Breast epithelium (tissue), 4 donors: ENCODE measurements at regions of chr19 and their contacts with region 1.

Region 1: GRCh38 chr19:51398096-51398704 is 7.8 kb upstream of the C19orf84 start:
- DNase-seq: no peak
- H3K4me3 ChIP-seq: no peak overlapping the region
- H3K27ac ChIP-seq: no peak overlapping the region
- H3K4me1 ChIP-seq: no peaks in the 10 kb centered on the region
- H3K27me3 ChIP-seq: no peaks in the 10 kb centered on the region
- CTCF ChIP-seq: peak in 2 of 3 donors; percentile 14 to 29
- POLR2A ChIP-seq: no peak

Region 2: GRCh38 chr19:51277112-51277511 is 121.1 kb before region 1 on chr19:
- intact Hi-C with region 1: loop called (anchors 5 kb)
- DNase-seq: no peak
- H3K4me3 ChIP-seq: no peak overlapping the region
- H3K27ac ChIP-seq: no peak overlapping the region
- H3K4me1 ChIP-seq: no peaks in the 10 kb centered on the region
- H3K27me3 ChIP-seq: peaks cover 0 to 19% of the 10 kb centered on the region in 2 donors
- CTCF ChIP-seq: no peak
- POLR2A ChIP-seq: no peak

Region 3: DNA sequence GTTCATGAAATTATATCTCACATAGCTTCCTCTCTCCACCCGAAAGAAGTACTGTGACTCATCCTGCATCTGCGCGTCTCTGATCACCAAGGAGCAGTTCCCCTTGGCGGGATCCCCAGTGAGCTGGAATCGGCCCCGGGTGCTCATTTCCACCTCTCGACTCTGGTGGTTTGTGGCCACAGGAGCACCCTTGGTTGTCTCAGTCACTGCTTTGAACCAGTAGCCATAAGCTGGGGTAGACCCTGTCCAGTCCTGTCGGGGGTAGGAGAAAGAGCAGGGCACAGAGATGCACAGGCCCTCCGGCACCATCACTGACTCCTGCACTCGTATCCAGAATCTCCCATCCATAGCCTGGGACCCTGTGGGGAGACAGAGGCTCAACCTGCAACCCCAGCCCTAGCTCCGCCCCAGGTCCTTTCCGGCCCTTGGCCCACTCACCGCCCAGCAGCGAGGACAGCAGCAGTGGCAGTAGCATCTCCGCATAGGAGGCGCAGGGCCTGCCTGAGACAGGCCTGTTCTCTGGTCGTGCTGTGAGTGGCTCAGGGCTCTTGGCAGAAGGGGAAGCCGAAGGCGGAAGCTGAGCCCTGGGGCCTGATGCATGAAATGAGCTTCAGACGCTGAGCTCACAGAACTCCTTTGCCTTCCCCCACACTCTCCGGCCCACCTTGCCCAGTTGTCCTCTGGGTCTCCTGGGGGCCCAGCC is 19.1 kb after region 1 on chr19 and contains the start of gene SIGLEC10:
- intact Hi-C with region 1: no loop called
- DNase-seq: no peak
- H3K4me3 ChIP-seq: no peak within 1 kb of the TSS
- H3K27ac ChIP-seq: no peak within 1 kb of the TSS
- H3K4me1 ChIP-seq: no peaks in the 10 kb centered on the region
- H3K27me3 ChIP-seq: peaks cover 0 to 41% of the 10 kb centered on the region in 2 donors
- CTCF ChIP-seq: no peak
- POLR2A ChIP-seq: no peak
- total RNA-seq, gene SIGLEC10: 1.8 to 17.0 (median 10.2) TPM

Region 4: DNA sequence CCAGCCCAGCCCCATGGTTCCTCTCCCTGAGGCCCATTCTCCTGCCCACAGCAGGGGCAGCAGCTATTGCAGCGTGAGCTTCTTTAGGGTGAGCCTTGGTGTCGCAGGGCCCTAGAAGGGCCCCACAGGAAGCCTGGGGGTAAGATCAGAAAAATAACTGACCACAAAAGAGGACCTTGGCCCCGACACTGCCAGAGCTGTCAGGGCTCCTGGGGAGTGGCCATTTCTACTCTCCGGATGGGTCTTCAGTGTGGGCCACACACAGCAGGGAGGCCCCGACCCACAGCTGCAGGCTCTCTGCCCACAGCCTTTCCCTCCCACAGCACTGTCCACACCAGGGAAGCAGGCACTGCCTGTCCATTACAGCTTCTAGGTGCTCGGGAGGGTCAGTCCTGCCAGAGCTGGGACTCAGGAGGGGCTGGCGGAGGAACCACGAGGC is 63.5 kb after region 1 on chr19:
- intact Hi-C with region 1: loop called (anchors 2 kb)
- DNase-seq: no peak
- H3K4me3 ChIP-seq: no peak overlapping the region
- H3K27ac ChIP-seq: no peak overlapping the region
- H3K4me1 ChIP-seq: no peaks in the 10 kb centered on the region
- H3K27me3 ChIP-seq: peaks cover 0 to 58% of the 10 kb centered on the region in 2 donors
- CTCF ChIP-seq: no peak
- POLR2A ChIP-seq: no peak